Esophagus squamous epithelium (tissue), 5 donors: ENCODE measurements at regions of chrX and their contacts with region 1.

Region 1: DNA sequence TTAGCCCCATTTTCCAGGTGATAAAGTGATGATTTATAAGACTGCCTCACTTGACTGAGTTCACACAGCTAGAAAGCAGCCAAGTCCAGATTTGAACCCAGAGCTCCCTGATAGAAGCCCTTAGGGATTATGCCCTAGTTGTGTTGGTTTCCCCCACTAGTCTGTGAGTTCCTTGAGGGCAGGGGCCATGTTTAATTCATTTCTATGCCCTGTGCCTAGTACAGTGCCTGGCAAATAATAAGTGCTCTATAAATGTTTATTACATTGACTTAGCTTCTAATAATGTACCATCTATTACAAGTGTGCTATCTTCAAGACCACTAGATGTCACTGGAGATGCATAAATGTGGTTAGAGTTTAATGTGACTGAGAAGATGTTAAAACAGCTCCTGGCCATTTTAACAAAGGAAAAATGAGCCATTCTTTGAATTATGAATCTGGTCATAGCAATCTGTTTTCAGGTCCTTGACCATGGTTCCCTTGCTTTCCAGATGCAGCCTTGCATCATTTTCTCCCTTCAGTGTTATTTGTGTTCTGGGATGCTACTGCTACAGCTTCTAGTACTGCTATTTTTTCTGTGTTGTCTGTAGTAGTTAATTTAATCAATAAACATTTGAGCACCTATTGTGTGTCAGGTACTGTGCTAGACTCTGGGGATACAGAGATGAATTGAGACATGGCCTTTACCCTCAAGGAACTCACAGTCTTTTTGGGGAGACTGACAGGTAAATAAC is 43.2 kb downstream of the SLC9A6 start:
- DNase-seq: no peak
- H3K4me3 ChIP-seq: no peak overlapping the region
- H3K27ac ChIP-seq: peak overlapping the region in 3 of 4 donors; percentile 75 to 82 (median 78)
- H3K4me1 ChIP-seq: peaks cover 0 to 9% (median 0%) of the 10 kb centered on the region in 3 donors
- H3K27me3 ChIP-seq: no peaks in the 10 kb centered on the region
- CTCF ChIP-seq: peak; percentile 26 to 66 (median 54)
- POLR2A ChIP-seq: no peak

Region 2: GRCh38 chrX:136162831-136163570 is 134.6 kb after region 1 on chrX:
- intact Hi-C with region 1: loop called (anchors 10 kb)
- DNase-seq: no peak
- H3K4me3 ChIP-seq: no peak overlapping the region
- H3K27ac ChIP-seq: peak overlapping the region in 3 of 4 donors; percentile 69 to 90 (median 82)
- H3K4me1 ChIP-seq: peaks cover 0 to 9% (median 4%) of the 10 kb centered on the region in 3 donors
- H3K27me3 ChIP-seq: no peaks in the 10 kb centered on the region
- CTCF ChIP-seq: peak in 5 of 6 experiments; percentile 50 to 69 (median 62)
- POLR2A ChIP-seq: no peak